ENCODE measurements at regions of chr14 and their contacts with region 1.

Region 1: GRCh38 chr14:88562831-88563686 is at the start of gene ZC3H14:
- DNase-seq: peak; percentile 93
- ATAC-seq: peak; percentile 92
- H3K4me3 ChIP-seq: peak within 1 kb of the TSS; percentile 74
- H3K27ac ChIP-seq: peak within 1 kb of the TSS; percentile 50
- H3K4me1 ChIP-seq: peaks cover 12% of the 10 kb centered on the region
- H3K27me3 ChIP-seq: no peaks in the 10 kb centered on the region
- CTCF ChIP-seq: no peak
- total RNA-seq, gene ZC3H14: 51.5 and 58.2 TPM in 2 replicates

Region 2: GRCh38 chr14:88189417-88190191 is 373.5 kb before region 1 on chr14:
- CTCF ChIA-PET with region 1: interaction called, 9 read pairs
- POLR2A ChIA-PET with region 1: no interaction called
- intact Hi-C with region 1: loop called (anchors 1 kb)
- DNase-seq: peak; percentile 96
- ATAC-seq: peak; percentile 98
- H3K4me3 ChIP-seq: peak overlapping the region; percentile 58
- H3K27ac ChIP-seq: no peak overlapping the region
- H3K4me1 ChIP-seq: 0 out of 2 replicates have a peak, but pooled peaks cover 5% of the 10 kb centered on the region
- H3K27me3 ChIP-seq: peaks cover 17% of the 10 kb centered on the region
- CTCF ChIP-seq: peak; percentile 86

Region 3: DNA sequence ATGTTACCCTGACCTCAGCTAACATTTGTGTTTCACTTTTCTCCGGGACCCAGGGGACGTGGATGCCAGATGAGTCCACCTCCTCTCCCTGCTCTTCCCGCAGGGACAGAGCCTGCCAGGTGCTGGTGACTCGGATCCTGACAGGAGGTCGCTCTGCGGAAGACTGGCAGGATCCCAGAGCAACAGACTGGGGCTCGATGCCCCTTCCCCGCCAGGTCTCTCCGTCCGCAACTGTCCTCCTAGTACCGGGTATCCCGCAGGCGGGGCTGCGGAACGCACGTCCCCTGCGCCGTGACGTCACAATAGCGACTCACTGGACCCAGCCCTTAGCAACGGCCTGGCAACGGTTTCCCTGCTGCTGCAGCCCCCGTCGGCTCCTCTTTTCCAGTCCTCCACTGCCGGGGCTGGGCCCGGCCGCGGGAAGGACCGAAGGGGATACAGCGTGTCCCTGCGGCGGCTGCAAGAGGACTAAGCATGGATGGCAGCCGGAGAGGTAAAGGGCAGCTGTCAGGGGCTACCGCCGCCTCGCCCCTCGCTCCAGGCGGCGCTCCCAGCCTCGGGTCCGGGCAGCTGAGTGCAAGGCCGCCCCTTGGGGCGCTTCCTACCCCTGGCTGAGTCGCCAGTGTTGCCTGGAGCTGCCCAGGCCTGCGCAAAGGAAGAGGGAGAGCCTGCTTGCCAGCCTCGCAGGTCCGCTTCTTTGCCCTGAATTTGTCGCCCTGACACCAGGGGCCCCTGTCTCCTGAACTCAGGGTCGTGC is 177.5 kb before region 1 on chr14 and contains the start of gene SPATA7:
- CTCF ChIA-PET with region 1: interaction called, 6 read pairs
- POLR2A ChIA-PET with region 1: no interaction called
- intact Hi-C with region 1: loop called (anchors 2 kb)
- DNase-seq: peak; percentile 93
- ATAC-seq: peak; percentile 97
- H3K4me3 ChIP-seq: peak within 1 kb of the TSS; percentile 95
- H3K27ac ChIP-seq: no peak within 1 kb of the TSS
- H3K4me1 ChIP-seq: peaks cover 10% of the 10 kb centered on the region
- H3K27me3 ChIP-seq: no peaks in the 10 kb centered on the region
- CTCF ChIP-seq: 0 out of 2 replicates have a peak, but pooled peaks have one; percentile 20
- total RNA-seq, gene SPATA7: 2.8 and 3.9 TPM in 2 replicates

Region 4: DNA sequence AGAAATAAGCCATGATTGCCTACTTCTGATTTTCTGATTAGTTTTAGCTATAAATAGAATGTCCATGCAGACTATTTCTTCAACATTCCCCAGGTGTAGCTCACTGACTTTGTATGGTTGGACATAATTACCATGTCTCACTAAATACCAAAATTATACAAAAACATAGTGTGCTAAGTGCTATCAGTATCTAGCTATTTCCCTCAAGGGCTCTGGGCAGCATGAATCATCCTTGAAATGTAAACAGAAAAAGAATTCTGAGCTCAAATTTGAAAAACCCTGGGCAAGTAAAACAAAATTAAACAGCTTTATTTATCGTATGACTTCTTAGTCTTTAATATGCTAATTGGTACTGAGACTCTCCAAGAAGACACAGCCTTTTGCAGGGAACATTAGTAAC is 94.7 kb before region 1 on chr14:
- CTCF ChIA-PET with region 1: interaction called, 5 read pairs
- POLR2A ChIA-PET with region 1: no interaction called
- intact Hi-C with region 1: loop called (anchors 1 kb)
- DNase-seq: peak; percentile 69
- ATAC-seq: peak; percentile 84
- H3K4me3 ChIP-seq: no peak overlapping the region
- H3K27ac ChIP-seq: no peak overlapping the region
- H3K4me1 ChIP-seq: peaks cover 15% of the 10 kb centered on the region
- H3K27me3 ChIP-seq: no peaks in the 10 kb centered on the region
- CTCF ChIP-seq: no peak

Region 5: GRCh38 chr14:88492272-88493089 is 70.6 kb before region 1 on chr14:
- CTCF ChIA-PET with region 1: interaction called, 5 read pairs
- POLR2A ChIA-PET with region 1: no interaction called
- intact Hi-C with region 1: loop called (anchors 1 kb)
- DNase-seq: peak; percentile 88
- ATAC-seq: peak; percentile 88
- H3K4me3 ChIP-seq: no peak overlapping the region
- H3K27ac ChIP-seq: no peak overlapping the region
- H3K4me1 ChIP-seq: no peaks in the 10 kb centered on the region
- H3K27me3 ChIP-seq: no peaks in the 10 kb centered on the region
- CTCF ChIP-seq: peak; percentile 96

Region 6: DNA sequence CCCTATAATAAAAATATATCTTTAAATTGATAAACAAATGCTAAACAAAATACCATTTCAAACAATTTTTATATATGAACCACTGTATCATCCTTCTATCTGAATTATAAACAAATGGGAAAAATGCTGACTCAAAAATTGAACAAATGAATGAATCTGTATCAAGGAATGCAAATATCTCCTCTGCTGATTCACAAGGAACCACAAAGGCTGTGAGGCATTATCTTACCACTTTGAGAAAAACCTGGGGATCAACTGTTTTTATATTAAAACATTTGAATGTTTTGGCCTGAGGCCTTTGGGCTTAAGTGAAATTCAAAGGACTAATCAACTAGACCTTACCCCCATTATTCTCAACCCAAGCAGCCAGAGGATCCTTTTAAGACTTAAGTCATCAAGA is 143.4 kb after region 1 on chr14:
- CTCF ChIA-PET with region 1: no interaction called
- POLR2A ChIA-PET with region 1: no interaction called
- intact Hi-C with region 1: no loop called
- DNase-seq: peak; percentile 76
- ATAC-seq: no peak; the same call in 1 of the 2 replicates
- H3K4me3 ChIP-seq: no peak overlapping the region
- H3K27ac ChIP-seq: peak overlapping the region; percentile 12; the same call in 1 of the 2 replicates
- H3K4me1 ChIP-seq: peaks cover 24% of the 10 kb centered on the region
- H3K27me3 ChIP-seq: no peaks in the 10 kb centered on the region
- CTCF ChIP-seq: no peak

Region 7: GRCh38 chr14:88868558-88869159 is 305.6 kb after region 1 on chr14:
- CTCF ChIA-PET with region 1: no interaction called
- POLR2A ChIA-PET with region 1: no interaction called
- intact Hi-C with region 1: loop called (anchors 5 kb)
- DNase-seq: peak; percentile 56
- ATAC-seq: peak; percentile 83
- H3K4me3 ChIP-seq: no peak overlapping the region
- H3K27ac ChIP-seq: no peak overlapping the region
- H3K4me1 ChIP-seq: no peaks in the 10 kb centered on the region
- H3K27me3 ChIP-seq: no peaks in the 10 kb centered on the region
- CTCF ChIP-seq: peak; percentile 67

Region 8: GRCh38 chr14:89954070-89955028 is 1391.3 kb after region 1 on chr14 and contains the start of gene EFCAB11:
- CTCF ChIA-PET with region 1: no interaction called
- POLR2A ChIA-PET with region 1: no interaction called
- intact Hi-C with region 1: loop called (anchors 5 kb)
- DNase-seq: peak; percentile 99
- ATAC-seq: peak; percentile 75
- H3K4me3 ChIP-seq: peak within 1 kb of the TSS; percentile 81
- H3K27ac ChIP-seq: peak within 1 kb of the TSS; percentile 61
- H3K4me1 ChIP-seq: peaks cover 20% of the 10 kb centered on the region
- H3K27me3 ChIP-seq: no peaks in the 10 kb centered on the region
- CTCF ChIP-seq: peak; percentile 40; the same call in 1 of the 2 replicates
- total RNA-seq, gene EFCAB11: 7.0 and 10.0 TPM in 2 replicates

Measured in PC-3 (cell line).